OCI-LY7 (cell line): ENCODE measurements at regions of chrX and their contacts with region 1.

Region 1: DNA sequence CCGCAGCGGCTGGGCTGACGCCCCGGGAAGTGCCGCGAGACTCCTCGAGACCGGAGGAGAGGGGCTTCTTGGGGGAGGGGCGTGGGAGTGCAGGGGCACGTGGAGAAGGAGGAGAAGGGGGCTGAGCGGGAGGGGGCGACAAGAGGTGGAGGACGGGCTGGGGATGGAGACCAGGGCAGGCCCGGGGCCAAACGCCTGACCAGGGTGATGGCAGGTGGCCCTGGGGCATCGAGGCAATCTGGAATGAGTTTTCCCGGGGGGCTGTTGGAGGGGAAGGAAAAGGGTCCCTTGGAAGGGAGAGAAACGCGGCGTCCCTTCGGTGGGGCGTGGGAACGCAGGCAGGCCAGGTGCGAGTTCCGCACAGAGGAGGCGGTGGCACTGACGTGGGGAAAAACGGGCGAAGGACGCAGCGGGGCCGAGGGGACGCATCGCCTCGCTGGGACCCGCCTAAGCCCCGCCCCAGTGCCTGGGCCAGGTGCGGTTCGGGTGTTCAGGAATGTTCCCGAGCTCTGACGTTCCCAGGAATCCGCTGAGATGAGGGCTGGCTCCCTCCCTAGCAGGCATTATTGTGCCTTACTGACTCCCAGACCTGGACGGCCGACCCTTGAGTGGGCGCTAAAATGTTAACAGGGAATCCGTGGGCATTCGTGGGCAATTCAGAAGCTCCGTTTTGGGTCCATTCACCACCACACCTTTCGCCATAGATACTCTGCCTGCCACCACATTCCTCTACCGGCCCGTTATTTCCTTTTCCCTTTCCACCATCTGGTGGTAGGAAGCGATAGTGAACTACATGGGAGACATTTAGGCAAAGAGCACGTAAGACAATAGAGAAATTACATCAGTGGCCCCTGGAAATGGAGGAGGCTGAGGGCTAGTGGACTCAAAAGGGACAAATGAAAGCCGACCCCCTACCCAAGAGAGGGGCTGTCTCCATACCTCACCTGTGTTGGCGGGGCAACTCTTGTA is 795 bp upstream of the SH3KBP1 start:
- DNase-seq: peak; percentile 73
- H3K4me3 ChIP-seq: peak overlapping the region; percentile 96
- H3K27ac ChIP-seq: peak overlapping the region; percentile 44
- H3K4me1 ChIP-seq: peaks cover 41% of the 10 kb centered on the region
- CTCF ChIP-seq: peak; percentile 70

Region 2: GRCh38 chrX:19544693-19545305 is 343.4 kb before region 1 on chrX:
- CTCF ChIA-PET with region 1: no interaction called
- POLR2A ChIA-PET with region 1: no interaction called
- intact Hi-C with region 1: loop called (anchors 1 kb)
- DNase-seq: peak; percentile 58
- H3K4me3 ChIP-seq: no peak overlapping the region
- H3K27ac ChIP-seq: no peak overlapping the region
- H3K4me1 ChIP-seq: no peaks in the 10 kb centered on the region
- CTCF ChIP-seq: peak; percentile 84

Region 3: DNA sequence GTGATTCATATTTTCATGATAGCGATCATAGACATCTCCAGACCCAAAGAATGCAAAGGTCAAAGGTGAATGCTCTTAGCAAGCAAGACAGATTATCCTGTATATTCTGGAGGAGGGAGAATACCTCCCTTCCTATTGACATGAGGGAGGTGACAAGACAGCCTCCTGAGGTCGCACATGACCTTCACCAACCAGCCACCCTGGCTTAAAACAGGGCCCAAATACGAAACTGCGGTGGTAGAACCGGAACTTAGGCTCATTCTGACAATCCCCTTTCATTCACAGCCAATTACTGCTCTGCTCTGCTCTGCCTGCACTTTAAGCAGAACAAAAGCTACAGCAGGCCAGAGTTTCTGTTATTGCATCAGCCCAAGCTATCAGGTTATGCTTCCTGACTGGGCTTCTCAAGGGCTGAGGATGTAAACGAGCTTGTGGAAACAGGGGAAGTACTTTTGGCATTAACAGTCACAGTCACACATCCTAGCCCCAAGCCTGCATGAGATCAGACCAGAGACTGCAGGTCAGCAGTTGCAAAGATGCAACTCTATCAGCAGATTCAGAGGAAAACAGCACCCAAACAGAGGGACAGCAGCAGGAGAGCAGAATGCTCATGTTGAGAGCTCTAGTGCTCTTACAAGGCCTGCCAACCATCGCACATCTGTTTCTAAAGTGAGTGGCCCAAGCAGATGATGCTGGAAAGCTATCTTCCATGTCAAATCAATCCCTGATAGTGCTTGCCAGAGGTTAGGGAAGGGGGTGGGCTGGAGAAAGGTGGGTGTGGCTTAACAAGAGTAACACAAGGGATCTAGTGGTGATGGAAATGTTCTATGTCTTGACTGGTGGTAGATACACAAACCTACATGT is 321.6 kb before region 1 on chrX:
- CTCF ChIA-PET with region 1: no interaction called
- POLR2A ChIA-PET with region 1: no interaction called
- intact Hi-C with region 1: loop called (anchors 1 kb)
- DNase-seq: peak; percentile 87
- H3K4me3 ChIP-seq: peak overlapping the region; percentile 25
- H3K27ac ChIP-seq: peak overlapping the region; percentile 91
- H3K4me1 ChIP-seq: peaks cover 45% of the 10 kb centered on the region
- CTCF ChIP-seq: no peak

Region 4: GRCh38 chrX:19593690-19594089 is 294.5 kb before region 1 on chrX:
- CTCF ChIA-PET with region 1: interaction called, 4 read pairs
- POLR2A ChIA-PET with region 1: no interaction called
- intact Hi-C with region 1: loop called (anchors 1 kb)
- DNase-seq: peak; percentile 48
- H3K4me3 ChIP-seq: no peak overlapping the region
- H3K27ac ChIP-seq: no peak overlapping the region
- H3K4me1 ChIP-seq: no peaks in the 10 kb centered on the region
- CTCF ChIP-seq: peak; percentile 72

Region 5: DNA sequence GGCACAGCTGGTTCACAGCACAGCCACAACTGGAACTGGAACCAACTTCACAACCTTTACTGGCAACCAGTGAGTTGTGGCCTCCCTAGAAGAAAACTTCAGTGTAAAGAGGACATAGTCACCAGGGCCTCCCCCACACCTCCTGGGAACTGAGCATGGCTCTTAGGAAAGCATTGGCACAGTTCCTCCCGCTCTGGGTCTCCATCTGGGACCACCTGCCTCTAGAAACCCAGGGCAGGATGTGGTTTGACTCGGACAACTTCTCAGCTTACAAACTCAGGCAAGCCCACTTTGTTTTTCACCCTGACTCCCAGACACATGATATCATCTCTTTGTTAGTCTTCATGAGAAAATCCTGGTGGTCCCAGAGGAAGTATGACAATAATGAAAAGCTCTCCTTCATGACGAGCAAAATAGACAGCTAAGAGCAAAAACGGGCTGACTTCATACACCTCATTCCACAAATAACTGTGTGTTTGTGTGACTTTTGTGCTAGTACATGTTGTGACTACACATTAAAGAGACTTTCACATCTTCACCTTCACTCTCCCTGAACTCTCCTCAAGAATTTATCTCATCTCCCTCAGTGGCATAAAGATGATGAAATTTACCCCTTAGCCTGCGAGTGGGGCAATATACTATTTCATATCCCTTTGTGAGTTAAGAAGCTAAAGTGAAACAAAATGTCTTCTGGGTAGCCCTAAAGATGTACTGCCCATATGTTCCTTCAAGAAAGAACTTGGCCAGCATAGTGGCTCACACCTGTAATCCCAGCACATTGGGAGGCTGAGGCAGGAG is 76.2 kb before region 1 on chrX:
- CTCF ChIA-PET with region 1: no interaction called
- POLR2A ChIA-PET with region 1: interaction called, 3 read pairs
- intact Hi-C with region 1: loop called (anchors 2 kb)
- DNase-seq: peak; percentile 68
- H3K4me3 ChIP-seq: peak overlapping the region; percentile 43
- H3K27ac ChIP-seq: peak overlapping the region; percentile 77
- H3K4me1 ChIP-seq: peaks cover 81% of the 10 kb centered on the region
- CTCF ChIP-seq: no peak

Region 6: GRCh38 chrX:19824603-19825002 is 63.6 kb before region 1 on chrX:
- CTCF ChIA-PET with region 1: no interaction called
- POLR2A ChIA-PET with region 1: no interaction called
- intact Hi-C with region 1: no loop called
- DNase-seq: no peak
- H3K4me3 ChIP-seq: no peak overlapping the region
- H3K27ac ChIP-seq: no peak overlapping the region
- H3K4me1 ChIP-seq: peaks cover 19% of the 10 kb centered on the region
- CTCF ChIP-seq: no peak

Region 7: GRCh38 chrX:19840899-19841648 is 47.1 kb before region 1 on chrX:
- CTCF ChIA-PET with region 1: no interaction called
- POLR2A ChIA-PET with region 1: interaction called, 3 read pairs
- intact Hi-C with region 1: loop called (anchors 2 kb)
- DNase-seq: peak; percentile 55
- H3K4me3 ChIP-seq: peak overlapping the region; percentile 46
- H3K27ac ChIP-seq: peak overlapping the region; percentile 81
- H3K4me1 ChIP-seq: peaks cover 51% of the 10 kb centered on the region
- CTCF ChIP-seq: no peak

Region 8: DNA sequence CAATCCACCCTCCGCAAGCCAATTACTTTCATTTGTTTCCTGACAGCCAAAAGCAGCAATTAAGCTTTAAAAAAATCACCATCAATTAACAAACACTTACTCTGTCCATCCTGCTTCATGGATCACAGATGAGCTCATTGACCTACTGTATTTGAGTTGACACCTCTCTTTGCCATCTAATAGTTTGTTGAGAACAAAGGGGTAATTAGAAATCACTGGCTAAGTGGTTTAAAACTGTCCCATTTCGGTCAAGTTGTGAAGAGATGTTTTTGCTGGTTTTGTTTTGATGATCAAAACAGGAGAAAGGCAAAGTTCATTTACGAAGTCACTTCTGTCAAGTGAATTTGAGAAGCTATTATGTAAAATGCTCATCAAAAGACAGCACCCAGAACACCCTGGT is 11.2 kb before region 1 on chrX:
- CTCF ChIA-PET with region 1: no interaction called
- POLR2A ChIA-PET with region 1: interaction called, 10 read pairs
- intact Hi-C with region 1: no loop called
- DNase-seq: no peak
- H3K4me3 ChIP-seq: no peak overlapping the region
- H3K27ac ChIP-seq: no peak overlapping the region
- H3K4me1 ChIP-seq: peaks cover 45% of the 10 kb centered on the region
- CTCF ChIP-seq: no peak